Testis (tissue), 5 donors: ENCODE measurements at regions of chr11 and their contacts with region 1.

Region 1: DNA sequence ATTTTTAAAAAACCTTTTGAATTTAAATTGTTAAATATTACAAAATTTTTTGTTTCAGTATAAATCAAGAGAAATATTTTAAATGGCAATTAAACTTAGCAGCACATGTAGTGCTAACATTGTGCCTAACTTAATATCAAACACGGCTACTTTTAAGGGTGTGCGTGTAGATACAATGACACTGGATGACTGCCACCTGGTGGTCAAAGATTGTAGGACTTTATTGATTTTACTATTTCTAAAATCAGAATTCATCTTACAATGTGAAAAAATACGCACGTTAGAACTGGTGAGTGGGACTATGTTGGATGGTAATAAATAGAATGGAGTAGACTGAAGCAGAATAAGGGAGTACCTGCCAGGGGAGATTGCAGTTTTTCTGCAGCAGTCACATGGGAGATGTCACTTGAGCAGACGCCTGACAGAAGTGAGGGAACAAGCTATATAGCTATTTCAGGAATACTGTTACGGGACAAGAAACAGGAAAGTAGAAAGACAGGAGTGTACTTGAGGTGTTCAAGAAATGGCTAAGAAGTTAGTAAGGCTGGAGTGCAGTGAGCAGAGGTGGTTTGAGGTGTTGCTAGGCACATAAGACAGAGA is 52.9 kb downstream of the UVRAG start:
- DNase-seq: peak; percentile 50
- H3K4me3 ChIP-seq: no peak overlapping the region
- H3K27ac ChIP-seq: no peak overlapping the region
- H3K4me1 ChIP-seq: peaks cover 10% of the 10 kb centered on the region
- H3K27me3 ChIP-seq: no peaks in the 10 kb centered on the region
- CTCF ChIP-seq: peak; percentile 89 to 90 (median 90)
- POLR2A ChIP-seq: no peak

Region 2: GRCh38 chr11:75195121-75195551 is 672.7 kb before region 1 on chr11:
- intact Hi-C with region 1: no loop called
- DNase-seq: peak; percentile 79
- H3K4me3 ChIP-seq: no peak overlapping the region
- H3K27ac ChIP-seq: no peak overlapping the region
- H3K4me1 ChIP-seq: peaks cover 36% of the 10 kb centered on the region
- H3K27me3 ChIP-seq: no peaks in the 10 kb centered on the region
- CTCF ChIP-seq: no peak
- POLR2A ChIP-seq: no peak

Region 3: DNA sequence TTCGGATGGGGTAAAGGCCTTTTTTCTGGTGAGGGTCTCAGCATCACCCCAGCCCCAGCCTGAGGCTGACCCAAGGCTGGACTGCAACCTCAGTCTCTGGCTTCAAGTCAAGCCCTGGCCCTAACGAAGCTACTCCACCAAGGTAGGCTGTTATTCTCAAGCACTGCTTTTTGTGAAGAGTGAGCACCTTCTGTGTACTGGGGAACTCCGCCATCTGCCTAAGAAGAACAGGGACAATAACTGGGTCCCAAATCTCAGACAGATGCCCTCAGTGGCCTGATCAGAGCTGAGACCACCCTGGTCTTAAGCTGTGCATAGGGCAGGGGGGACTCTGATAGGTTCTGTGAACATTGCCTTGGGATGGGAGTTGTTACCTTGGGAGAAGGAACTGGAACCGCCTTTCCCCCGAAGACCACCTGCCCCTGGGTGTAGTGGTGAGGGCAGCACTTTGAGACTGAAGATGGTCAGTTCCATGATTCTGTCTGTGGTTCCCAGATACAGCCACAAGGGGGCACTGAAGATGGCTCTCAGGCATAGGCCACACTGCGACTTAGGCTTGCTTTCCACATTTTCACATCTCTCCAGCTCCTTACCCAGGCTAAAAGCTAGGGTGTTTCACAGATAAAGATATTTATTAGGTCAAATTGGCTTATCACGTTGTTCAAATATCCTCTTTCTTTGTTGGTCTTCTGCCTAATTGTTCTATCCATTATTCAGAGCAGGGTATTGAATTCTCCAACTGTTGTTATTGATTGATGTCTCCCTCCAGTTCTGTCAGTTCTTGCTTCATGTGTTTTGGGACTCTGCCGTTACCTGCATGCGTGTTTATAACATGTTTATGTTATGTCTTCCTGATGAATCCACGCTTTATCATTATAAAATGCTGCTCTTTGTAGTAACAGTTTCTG is 64.7 kb before region 1 on chr11:
- intact Hi-C with region 1: loop called (anchors 10 kb)
- DNase-seq: peak; percentile 90
- H3K4me3 ChIP-seq: no peak overlapping the region
- H3K27ac ChIP-seq: no peak overlapping the region
- H3K4me1 ChIP-seq: no peaks in the 10 kb centered on the region
- H3K27me3 ChIP-seq: no peaks in the 10 kb centered on the region
- CTCF ChIP-seq: peak; percentile 79 to 84 (median 81)
- POLR2A ChIP-seq: no peak